ENCODE measurements at regions of chr11 and their contacts with region 1.

Region 1: GRCh38 chr11:46308631-46309419 is 31.4 kb downstream of the CREB3L1 start:
- DNase-seq: peak; percentile 85
- H3K4me3 Mint-ChIP-seq: no peak overlapping the region
- H3K27ac Mint-ChIP-seq: no peak overlapping the region
- H3K4me1 Mint-ChIP-seq: peaks cover 7% of the 10 kb centered on the region
- H3K27me3 Mint-ChIP-seq: no peaks in the 10 kb centered on the region

Region 2: GRCh38 chr11:45964911-45965389 is 343.9 kb before region 1 on chr11:
- CTCF ChIA-PET with region 1: interaction called, 12 read pairs
- intact Hi-C with region 1: loop called (anchors 1 kb)
- DNase-seq: peak; percentile 72
- H3K4me3 Mint-ChIP-seq: no peak overlapping the region
- H3K27ac Mint-ChIP-seq: no peak overlapping the region
- H3K4me1 Mint-ChIP-seq: no peaks in the 10 kb centered on the region
- H3K27me3 Mint-ChIP-seq: no peaks in the 10 kb centered on the region

Region 3: DNA sequence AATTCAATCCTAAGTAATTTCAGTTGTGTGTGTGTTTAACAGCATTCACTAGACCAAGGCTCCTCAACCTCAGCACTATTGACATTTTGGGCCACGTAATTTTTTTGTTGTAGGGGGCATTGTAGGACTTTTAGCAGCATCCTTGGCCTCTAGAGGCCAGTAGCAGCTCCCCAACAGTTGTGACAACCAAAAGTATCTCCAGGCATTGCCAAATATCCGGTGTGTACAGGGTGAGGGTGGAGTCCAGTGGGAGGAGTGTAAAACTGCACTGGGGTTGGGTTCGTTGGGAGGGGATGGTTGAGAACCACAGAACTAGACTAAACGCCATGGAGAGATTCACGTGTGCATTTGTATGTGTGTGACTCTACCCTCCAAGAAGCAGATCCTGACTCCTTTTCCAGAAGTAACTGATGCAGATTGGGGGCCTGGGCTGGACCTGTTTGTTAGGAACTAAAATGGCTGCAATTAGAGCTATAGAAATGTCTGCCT is 181.6 kb before region 1 on chr11:
- CTCF ChIA-PET with region 1: interaction called, 5 read pairs
- intact Hi-C with region 1: loop called (anchors 1 kb)
- DNase-seq: peak; percentile 73
- H3K4me3 Mint-ChIP-seq: peak overlapping the region; percentile 25
- H3K27ac Mint-ChIP-seq: peak overlapping the region; percentile 5
- H3K4me1 Mint-ChIP-seq: peaks cover 23% of the 10 kb centered on the region
- H3K27me3 Mint-ChIP-seq: no peaks in the 10 kb centered on the region

Region 4: DNA sequence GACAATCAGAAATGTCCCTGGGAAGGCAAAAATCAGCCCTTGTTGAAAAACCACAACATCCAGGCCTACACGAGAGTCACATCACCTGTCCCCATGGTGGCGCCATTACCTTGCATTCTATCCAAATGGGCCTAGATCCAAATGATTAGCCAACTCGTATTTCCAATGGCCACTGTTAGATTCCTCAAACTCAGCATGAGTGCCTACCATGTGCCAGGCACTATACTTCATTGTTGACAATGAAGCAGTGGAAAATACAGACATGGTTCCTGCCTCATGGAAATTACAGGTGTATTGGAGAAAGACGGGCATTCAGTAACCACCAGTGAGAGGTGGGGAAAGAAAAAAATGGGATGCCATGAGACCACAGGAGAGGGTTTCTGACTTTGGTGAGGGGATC is 61.2 kb before region 1 on chr11:
- CTCF ChIA-PET with region 1: interaction called, 298 read pairs
- intact Hi-C with region 1: loop called (anchors 1 kb)
- DNase-seq: peak; percentile 74
- H3K4me3 Mint-ChIP-seq: no peak overlapping the region
- H3K27ac Mint-ChIP-seq: no peak overlapping the region
- H3K4me1 Mint-ChIP-seq: peaks cover 14% of the 10 kb centered on the region
- H3K27me3 Mint-ChIP-seq: no peaks in the 10 kb centered on the region

Region 5: GRCh38 chr11:46278387-46279125 is 30.3 kb before region 1 on chr11:
- CTCF ChIA-PET with region 1: interaction called, 12 read pairs
- intact Hi-C with region 1: no loop called
- DNase-seq: peak; percentile 60
- H3K4me3 Mint-ChIP-seq: no peak overlapping the region
- H3K27ac Mint-ChIP-seq: no peak overlapping the region
- H3K4me1 Mint-ChIP-seq: peaks cover 3% of the 10 kb centered on the region
- H3K27me3 Mint-ChIP-seq: peaks cover 28% of the 10 kb centered on the region

Region 6: DNA sequence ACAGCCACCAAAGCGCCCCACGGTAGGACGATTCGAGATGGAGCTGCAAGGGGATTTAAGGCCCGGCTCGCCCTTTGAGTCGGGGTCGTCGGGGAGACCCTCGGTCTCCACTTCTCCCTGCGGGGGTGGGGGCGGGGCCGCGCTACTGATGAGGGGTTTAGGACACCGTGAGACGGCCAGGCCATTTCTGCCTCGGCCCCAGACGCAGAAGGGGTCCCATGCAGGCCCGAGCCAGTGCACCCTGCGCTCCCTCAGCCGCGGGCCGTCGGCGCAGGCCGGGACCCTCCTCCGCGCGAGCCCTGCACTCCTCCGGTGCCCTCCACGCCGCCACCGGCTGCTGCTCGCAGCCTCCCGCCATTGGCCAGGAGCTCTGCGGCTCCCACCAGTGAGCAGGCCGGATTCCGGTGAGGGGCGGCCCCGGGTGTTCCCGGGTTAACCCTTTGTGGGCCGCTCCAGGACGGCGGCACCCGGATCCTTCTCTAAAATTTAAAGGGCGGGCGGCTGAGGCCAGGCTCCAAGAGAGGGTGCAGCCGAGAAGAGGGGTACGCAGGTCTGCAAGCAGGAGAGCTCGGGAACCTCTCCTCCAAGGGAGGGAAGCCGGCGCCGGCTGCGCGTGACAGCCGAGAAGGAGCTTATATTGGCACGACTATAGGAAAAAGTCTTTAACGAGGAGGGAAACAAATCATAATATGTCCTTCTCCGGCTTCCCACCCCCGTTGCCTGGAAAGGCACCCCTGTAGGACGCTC is 13.3 kb before region 1 on chr11:
- CTCF ChIA-PET with region 1: interaction called, 68 read pairs
- intact Hi-C with region 1: no loop called
- DNase-seq: peak; percentile 71
- H3K4me3 Mint-ChIP-seq: peak overlapping the region; percentile 76
- H3K27ac Mint-ChIP-seq: no peak overlapping the region
- H3K4me1 Mint-ChIP-seq: peaks cover 11% of the 10 kb centered on the region
- H3K27me3 Mint-ChIP-seq: peaks cover 6% of the 10 kb centered on the region

Region 7: GRCh38 chr11:46332568-46333393 is 24.0 kb after region 1 on chr11:
- CTCF ChIA-PET with region 1: interaction called, 40 read pairs
- intact Hi-C with region 1: no loop called
- DNase-seq: peak; percentile 62
- H3K4me3 Mint-ChIP-seq: peak overlapping the region; percentile 80
- H3K27ac Mint-ChIP-seq: no peak overlapping the region
- H3K4me1 Mint-ChIP-seq: peaks cover 76% of the 10 kb centered on the region
- H3K27me3 Mint-ChIP-seq: no peaks in the 10 kb centered on the region

Region 8: DNA sequence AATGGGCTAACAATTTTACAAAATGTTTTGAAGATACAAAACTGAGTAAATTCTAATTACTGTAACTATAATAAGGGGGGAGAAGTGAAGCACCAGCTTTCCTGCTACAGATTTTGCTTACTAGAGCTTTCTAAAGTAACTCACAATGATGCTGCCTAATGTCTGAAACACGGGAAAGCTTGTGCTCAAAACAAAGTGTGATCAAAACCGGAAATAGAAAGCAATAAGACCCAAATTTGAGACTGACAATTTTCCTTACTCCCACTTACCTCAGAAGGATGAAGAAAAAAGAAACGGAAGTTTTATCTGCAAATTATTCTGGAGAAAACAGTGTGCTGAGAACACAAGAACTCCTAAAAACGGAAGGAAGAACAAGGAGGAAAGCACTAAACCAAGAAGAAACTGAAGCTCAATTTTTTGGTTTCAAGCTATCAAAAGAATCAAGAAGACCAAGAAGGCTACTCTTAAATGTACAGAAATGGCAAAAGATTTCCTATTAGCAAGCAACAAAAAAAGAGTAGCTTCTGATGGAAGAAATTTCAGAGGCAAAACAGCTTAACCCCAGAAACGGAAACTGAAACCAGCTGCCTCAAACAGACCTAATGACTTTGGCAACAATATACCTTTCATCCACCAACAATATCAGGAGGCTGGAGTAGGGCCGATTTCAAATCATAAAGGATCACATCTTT is 251.6 kb after region 1 on chr11:
- CTCF ChIA-PET with region 1: no interaction called
- intact Hi-C with region 1: no loop called
- DNase-seq: peak; percentile 52
- H3K4me3 Mint-ChIP-seq: peak overlapping the region; percentile 75
- H3K27ac Mint-ChIP-seq: peak overlapping the region; percentile 82
- H3K4me1 Mint-ChIP-seq: peaks cover 61% of the 10 kb centered on the region
- H3K27me3 Mint-ChIP-seq: no peaks in the 10 kb centered on the region

Region 9: DNA sequence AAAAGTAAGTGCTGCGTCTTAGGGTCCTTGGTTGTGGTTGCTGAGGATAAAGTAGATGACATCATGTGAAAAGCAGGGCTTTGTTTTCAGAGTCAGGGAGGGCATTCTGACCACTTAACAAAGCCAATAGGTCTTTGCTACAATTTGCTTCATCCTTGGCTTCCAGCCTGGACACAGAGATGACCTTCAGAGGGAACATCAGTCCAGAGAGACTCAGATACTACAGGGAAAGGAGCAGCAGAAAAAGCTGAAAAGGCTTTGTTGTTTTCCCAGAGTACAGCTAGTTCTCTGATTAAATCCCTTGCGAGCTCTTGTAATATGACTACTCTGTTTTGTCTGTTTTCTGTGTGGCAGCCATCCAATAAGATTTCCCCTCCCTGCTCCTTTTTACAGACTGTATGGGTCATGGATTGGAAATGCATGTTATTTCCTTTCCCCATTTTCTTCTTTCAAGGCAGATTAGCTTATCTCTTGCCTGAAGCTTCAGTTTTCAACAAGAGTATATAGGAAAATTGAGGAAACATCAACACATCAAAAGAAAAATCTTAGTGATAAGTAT is 340.4 kb after region 1 on chr11:
- CTCF ChIA-PET with region 1: no interaction called
- intact Hi-C with region 1: no loop called
- DNase-seq: no peak
- H3K4me3 Mint-ChIP-seq: no peak overlapping the region
- H3K27ac Mint-ChIP-seq: no peak overlapping the region
- H3K4me1 Mint-ChIP-seq: no peaks in the 10 kb centered on the region
- H3K27me3 Mint-ChIP-seq: no peaks in the 10 kb centered on the region